PC-3 (cell line): ENCODE measurements at regions of chr6 and their contacts with region 1.

Region 1: DNA sequence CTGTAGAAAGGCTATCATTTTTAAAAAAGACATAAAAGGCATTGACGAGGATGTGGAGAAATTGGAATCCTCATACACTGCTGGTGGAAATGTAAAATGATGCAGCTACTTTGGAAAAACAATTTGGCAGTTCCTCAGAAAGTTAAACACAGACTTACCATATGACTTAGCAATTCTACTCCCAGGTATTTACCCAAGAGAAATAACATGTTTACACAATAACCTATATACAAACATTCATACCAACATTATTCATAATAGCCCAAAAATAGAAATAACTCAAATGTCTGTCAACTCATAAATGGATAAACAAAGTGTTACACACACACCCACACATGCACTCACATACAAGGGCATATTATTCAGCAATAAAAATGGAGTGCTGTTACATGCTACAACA is 23.4 kb upstream of the CEP85L start:
- DNase-seq: peak; percentile 51
- ATAC-seq: peak; percentile 80
- H3K4me3 ChIP-seq: no peak overlapping the region
- H3K27ac ChIP-seq: peak overlapping the region; percentile 10; the same call in 1 of the 2 replicates
- H3K4me1 ChIP-seq: peaks cover 17% of the 10 kb centered on the region
- H3K27me3 ChIP-seq: no peaks in the 10 kb centered on the region
- CTCF ChIP-seq: no peak

Region 2: GRCh38 chr6:118709859-118710350 is 35.1 kb after region 1 on chr6:
- CTCF ChIA-PET with region 1: no interaction called
- POLR2A ChIA-PET with region 1: no interaction called
- intact Hi-C with region 1: loop called (anchors 2 kb)
- DNase-seq: peak; percentile 75
- ATAC-seq: peak; percentile 64
- H3K4me3 ChIP-seq: peak overlapping the region; percentile 66
- H3K27ac ChIP-seq: peak overlapping the region; percentile 99
- H3K4me1 ChIP-seq: peaks cover 49% of the 10 kb centered on the region
- H3K27me3 ChIP-seq: no peaks in the 10 kb centered on the region
- CTCF ChIP-seq: no peak